ENCODE measurements at regions of chr4 and their contacts with region 1.

Region 1: GRCh38 chr4:139083956-139084803 is 68.6 kb downstream of the NOCT start:
- DNase-seq: peak; percentile 83 to 96
- H3K4me3 ChIP-seq: peak overlapping the region; percentile 82
- CTCF ChIP-seq: no peak
- POLR2A ChIP-seq: no peak

Region 2: GRCh38 chr4:139177868-139178611 is 93.9 kb after region 1 on chr4:
- intact Hi-C with region 1: loop called (anchors 10 kb)
- DNase-seq: peak; percentile 92 to 99
- H3K4me3 ChIP-seq: peak overlapping the region; percentile 90
- CTCF ChIP-seq: no peak
- POLR2A ChIP-seq: no peak